AG04449 (cell line): ENCODE measurements at regions of chr1 and their contacts with region 1.

Region 1: GRCh38 chr1:235253219-235253962 is 74.6 kb downstream of the ARID4B start:
- DNase-seq: no peak
- H3K4me3 ChIP-seq: no peak overlapping the region
- CTCF ChIP-seq: peak; percentile 74

Region 2: DNA sequence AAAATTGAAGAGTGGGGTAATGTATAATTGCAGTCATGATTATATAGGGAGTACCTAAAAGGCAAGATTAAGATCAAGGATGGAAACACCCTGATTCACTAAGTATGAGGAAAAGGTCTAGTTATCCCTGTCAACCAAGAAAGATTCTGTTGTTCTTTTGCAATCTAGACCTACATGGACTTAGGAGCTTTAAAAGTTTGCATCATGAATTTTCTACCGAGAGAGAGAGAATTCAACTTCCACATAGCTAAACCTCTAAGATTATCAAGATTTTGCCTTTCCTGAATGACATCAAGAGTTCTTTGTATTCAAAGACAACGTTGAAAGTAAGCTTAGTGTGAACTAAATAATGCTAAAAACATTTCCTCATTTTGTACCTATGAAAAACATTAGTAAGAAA is 13.5 kb before region 1 on chr1:
- CTCF ChIA-PET with region 1: interaction called, 18 read pairs
- POLR2A ChIA-PET with region 1: no interaction called
- DNase-seq: no peak
- H3K4me3 ChIP-seq: no peak overlapping the region
- CTCF ChIP-seq: no peak

Region 3: DNA sequence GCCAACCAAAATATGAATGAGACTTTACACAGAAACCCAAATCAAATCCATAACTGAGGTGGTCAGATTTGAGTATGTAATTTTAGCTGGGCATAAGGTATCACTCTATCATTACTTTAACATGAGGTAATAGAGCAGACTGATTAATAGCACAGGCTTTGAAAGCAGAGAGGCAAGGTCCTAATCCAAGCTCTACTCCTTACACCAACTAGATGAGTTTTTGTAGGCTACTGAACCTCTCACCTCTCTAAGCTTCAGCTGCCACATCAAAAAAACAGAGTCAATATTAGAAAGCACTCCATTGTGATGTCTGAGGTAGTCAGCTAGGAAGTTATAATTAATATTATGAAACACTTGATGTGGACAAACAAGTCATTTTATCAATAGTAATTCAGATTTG is 10.9 kb after region 1 on chr1:
- CTCF ChIA-PET with region 1: interaction called, 22 read pairs
- POLR2A ChIA-PET with region 1: no interaction called
- DNase-seq: no peak
- H3K4me3 ChIP-seq: no peak overlapping the region
- CTCF ChIP-seq: no peak